Tibial artery (tissue), 4 donors: ENCODE measurements at regions of chr2 and their contacts with region 1.

Region 1: GRCh38 chr2:224802407-224802806 is 86.2 kb upstream of the CCDC195 start:
- DNase-seq: no peak
- H3K4me3 ChIP-seq: no peak overlapping the region
- H3K27ac ChIP-seq: no peak overlapping the region
- H3K4me1 ChIP-seq: no peaks in the 10 kb centered on the region
- H3K27me3 ChIP-seq: no peaks in the 10 kb centered on the region
- CTCF ChIP-seq: no peak

Region 2: DNA sequence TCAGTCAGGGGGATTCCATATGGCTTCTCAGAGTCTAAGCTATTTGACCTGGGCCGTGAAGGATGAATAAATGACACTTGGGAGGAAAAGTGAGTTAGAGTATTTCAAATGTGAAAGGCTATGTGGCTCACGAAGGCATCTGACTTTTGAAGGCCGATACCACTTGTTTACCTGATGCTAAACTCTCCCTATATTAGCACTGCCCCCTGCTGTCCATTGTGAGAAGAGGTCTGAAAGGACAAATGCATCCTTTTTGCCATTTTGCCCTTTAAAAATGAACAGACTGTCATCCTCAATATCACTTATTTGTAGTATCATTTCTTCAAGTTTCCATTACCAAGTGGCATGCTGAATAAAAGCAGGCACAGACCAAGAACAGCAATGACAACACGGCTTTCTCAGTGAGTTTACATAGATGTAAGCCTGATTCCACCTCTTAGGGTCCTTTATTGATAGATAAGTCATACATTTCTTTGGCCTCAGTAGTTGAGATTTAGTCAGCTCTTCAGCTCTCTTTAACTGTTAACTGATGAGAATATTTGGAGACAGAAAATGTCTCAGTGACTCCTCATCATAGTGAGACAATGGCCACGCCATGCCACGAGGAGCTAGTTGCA is 199.7 kb after region 1 on chr2:
- intact Hi-C with region 1: loop called (anchors 10 kb)
- DNase-seq: peak in 1 of 2 donors; percentile 41
- H3K4me3 ChIP-seq: no peak overlapping the region
- H3K27ac ChIP-seq: peak overlapping the region in 1 of 2 donors; percentile 24
- H3K4me1 ChIP-seq: peaks cover 0 to 4% (median 3%) of the 10 kb centered on the region in 4 donors
- H3K27me3 ChIP-seq: no peaks in the 10 kb centered on the region
- CTCF ChIP-seq: peak; percentile 82 to 90